SK-N-SH (cell line): ENCODE measurements at regions of chr2 and their contacts with region 1.

Region 1: DNA sequence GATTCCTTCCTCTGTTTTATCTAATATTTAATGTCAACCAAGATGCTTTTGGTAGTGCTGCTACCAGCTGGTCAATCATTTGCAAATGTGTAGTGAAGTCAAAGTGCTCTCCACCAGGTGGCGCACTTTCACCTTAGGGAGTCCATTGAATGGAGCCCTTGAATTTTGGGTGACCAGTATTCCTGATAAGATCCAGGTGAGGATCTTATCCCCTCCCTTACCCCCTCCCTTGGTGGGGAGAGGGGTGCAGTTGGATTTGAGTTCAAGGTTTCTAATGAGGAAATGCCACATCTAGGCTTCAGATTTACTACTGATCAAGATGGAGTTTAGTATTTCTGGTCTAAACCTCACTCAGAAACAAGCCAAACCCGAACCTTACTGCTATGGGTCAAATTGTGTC is 12.0 kb upstream of the E2F6 start:
- DNase-seq: peak; percentile 74
- H3K4me3 ChIP-seq: no peak overlapping the region; a peak in 1 of 4 replicates
- H3K27ac ChIP-seq: no peak overlapping the region
- H3K4me1 ChIP-seq: peaks cover 0 to 3% of the 10 kb centered on the region in 2 experiments; a peak in 1 of 4 replicates
- H3K27me3 ChIP-seq: peaks cover 12% of the 10 kb centered on the region; the same call in 1 of the 2 replicates
- CTCF ChIP-seq: peak; percentile 99
- EP300 ChIP-seq: 0 out of 4 replicates have a peak, but pooled peaks of 1 of the 2 experiments have one; percentile 12
- RAD21 ChIP-seq: peak; percentile 93

Region 2: DNA sequence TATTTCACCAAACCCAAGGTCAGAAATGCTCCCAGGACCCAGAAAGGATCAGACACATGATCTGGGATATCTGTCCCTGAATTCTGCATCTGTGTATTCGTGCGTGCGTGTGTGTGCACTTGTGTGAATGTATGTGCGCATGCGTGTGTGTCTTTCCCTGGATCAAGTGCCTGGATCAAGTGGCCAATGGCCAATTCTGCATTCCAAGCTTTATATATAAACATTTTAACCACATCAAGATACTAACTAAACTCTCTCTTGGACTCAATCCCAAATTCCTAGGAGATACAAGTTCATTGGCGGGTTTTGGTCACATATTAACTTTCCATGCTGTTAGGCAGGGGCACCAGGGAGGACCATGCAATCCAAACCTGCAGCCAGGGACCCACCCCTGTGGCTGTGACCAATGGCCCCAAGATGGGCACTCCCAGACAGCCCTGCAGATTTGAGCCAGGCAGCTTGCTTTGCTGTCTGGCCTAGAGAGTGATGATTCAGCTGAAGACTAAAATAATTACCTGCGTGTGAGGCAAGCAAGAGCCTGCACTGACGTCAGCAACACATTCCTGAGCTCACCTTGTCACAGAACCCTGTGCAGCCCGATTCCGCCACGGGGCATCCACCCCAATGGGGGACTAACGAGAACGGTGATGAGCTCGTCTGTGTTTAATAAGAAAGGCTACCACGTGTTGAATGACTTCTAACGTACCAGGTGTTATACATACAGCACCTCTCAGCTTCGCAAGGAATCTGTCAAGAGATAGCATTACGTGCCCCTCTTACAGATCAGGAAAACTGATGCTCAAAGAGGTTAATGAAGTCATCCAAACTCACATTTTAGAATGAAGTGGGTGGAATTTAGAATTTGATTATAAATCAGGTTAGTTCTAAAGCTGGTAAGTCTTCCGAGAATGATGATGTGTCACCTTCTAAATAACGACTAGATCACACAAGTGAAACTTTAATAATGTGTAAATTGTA is 88.2 kb before region 1 on chr2:
- CTCF ChIA-PET with region 1: no interaction called
- POLR2A ChIA-PET with region 1: no interaction called
- DNase-seq: no peak
- H3K4me3 ChIP-seq: no peak overlapping the region
- H3K27ac ChIP-seq: no peak overlapping the region
- H3K4me1 ChIP-seq: peaks cover 21 to 27% of the 10 kb centered on the region in 2 experiments; a peak in 3 of 4 replicates
- H3K27me3 ChIP-seq: no peaks in the 10 kb centered on the region
- CTCF ChIP-seq: no peak
- EP300 ChIP-seq: no peak
- RAD21 ChIP-seq: no peak

Region 3: DNA sequence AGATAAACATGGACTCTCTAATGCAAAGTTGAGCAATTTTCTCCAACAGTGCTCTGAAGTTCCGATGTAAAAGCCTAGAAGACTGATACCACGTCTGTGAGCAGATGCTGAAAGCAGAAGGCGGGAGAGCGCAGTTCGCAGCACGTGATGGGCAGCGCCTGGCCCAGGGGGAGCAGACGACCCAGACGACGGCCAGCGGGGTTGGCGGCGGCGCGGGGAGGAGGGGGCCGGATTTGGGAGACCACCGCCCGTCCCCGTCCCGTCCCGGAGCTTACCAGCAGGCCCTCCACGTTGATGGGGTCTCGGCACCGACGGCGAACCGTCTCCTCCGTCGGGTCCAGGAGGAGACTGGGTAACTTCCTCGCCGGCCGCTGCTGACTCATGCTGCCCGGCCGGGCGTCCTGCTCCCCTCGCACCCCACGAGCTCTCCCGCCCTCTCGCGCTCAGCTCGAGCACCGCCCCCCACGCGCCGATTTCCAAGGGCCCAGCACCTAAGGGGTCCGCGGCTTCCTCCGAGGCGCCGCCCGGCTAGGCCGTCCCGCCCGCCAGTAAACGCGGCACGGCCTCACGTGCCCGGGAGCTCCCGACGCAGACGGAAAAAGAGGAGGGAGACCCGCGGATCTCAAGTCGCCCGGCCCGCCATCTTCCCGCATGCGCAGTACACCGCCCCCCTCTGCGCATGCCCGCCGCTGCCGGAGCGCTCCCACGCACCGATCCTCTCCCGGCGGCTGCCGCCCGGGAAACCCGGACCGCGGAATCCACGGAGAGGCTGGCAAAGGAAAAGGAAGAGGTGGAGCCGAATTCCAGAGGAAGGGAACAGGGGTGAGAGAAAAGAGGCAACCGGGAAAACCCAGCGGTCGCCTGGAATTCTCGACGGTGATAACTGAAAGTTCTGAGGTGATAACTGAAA is 12.2 kb before region 1 on chr2 and contains the start of gene E2F6:
- CTCF ChIA-PET with region 1: interaction called, 55 read pairs
- POLR2A ChIA-PET with region 1: interaction called, 16 read pairs
- DNase-seq: peak; percentile 98
- H3K4me3 ChIP-seq: peak within 1 kb of the TSS; percentile 64 to 72
- H3K27ac ChIP-seq: peak within 1 kb of the TSS; percentile 86 to 90
- H3K4me1 ChIP-seq: peaks cover 16 to 27% of the 10 kb centered on the region in 2 experiments
- H3K27me3 ChIP-seq: no peaks in the 10 kb centered on the region
- CTCF ChIP-seq: no peak
- EP300 ChIP-seq: peak; percentile 48 to 72
- RAD21 ChIP-seq: no peak
- polyA plus RNA-seq, gene E2F6: 15.3 and 19.7 TPM in 2 replicates

Region 4: DNA sequence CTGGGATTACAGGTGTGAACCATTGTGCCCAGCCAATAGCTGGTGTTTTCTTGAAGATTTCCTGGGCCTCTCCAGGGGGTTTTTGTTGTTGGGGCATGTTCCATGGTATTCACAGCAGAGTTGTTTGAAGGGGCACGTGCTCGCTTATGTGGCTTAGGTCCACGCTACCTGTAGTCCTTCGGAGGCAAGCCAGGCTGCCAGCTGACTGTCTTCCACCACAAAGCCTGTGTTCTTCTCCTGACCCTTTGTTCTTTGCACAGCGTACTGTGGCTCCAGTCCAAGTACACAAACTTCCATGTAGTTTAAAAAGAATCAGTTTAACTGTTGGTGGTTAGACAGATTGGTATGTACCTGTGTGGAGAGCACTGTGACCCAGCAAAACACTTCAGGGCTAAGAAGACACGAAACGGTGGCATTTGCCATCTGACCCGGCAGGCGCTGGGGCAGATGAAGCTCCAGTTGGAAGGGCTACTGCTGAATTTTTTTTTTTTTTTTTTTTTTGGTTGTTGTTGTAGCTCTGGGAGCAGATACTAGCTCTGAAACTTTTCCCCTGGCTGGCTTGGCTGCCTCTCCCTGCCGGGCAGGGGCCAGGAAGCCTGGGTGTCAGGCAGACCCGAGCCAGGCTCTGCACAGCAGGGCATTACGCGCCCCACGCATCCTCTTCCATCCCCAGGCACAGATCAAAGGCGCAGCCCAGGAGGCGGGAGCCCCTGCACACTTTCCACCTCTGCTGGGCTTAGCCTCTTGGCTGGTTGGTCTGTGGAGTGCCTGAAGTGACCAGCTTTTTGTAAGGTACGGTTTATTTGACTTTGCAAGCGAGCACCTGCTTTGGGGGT is 61.5 kb after region 1 on chr2:
- CTCF ChIA-PET with region 1: interaction called, 13 read pairs
- POLR2A ChIA-PET with region 1: no interaction called
- DNase-seq: no peak
- H3K4me3 ChIP-seq: no peak overlapping the region
- H3K27ac ChIP-seq: no peak overlapping the region
- H3K4me1 ChIP-seq: peaks cover 0 to 43% of the 10 kb centered on the region in 2 experiments; a peak in 2 of 4 replicates
- H3K27me3 ChIP-seq: peaks cover 16% of the 10 kb centered on the region; the same call in 1 of the 2 replicates
- CTCF ChIP-seq: no peak
- EP300 ChIP-seq: no peak
- RAD21 ChIP-seq: no peak

Region 5: GRCh38 chr2:11573418-11574175 is 95.6 kb after region 1 on chr2:
- CTCF ChIA-PET with region 1: interaction called, 708 read pairs
- POLR2A ChIA-PET with region 1: no interaction called
- DNase-seq: no peak
- H3K4me3 ChIP-seq: no peak overlapping the region
- H3K27ac ChIP-seq: no peak overlapping the region
- H3K4me1 ChIP-seq: no peaks in the 10 kb centered on the region; a peak in 1 of 4 replicates
- H3K27me3 ChIP-seq: no peaks in the 10 kb centered on the region
- CTCF ChIP-seq: no peak
- EP300 ChIP-seq: no peak
- RAD21 ChIP-seq: no peak

Region 6: DNA sequence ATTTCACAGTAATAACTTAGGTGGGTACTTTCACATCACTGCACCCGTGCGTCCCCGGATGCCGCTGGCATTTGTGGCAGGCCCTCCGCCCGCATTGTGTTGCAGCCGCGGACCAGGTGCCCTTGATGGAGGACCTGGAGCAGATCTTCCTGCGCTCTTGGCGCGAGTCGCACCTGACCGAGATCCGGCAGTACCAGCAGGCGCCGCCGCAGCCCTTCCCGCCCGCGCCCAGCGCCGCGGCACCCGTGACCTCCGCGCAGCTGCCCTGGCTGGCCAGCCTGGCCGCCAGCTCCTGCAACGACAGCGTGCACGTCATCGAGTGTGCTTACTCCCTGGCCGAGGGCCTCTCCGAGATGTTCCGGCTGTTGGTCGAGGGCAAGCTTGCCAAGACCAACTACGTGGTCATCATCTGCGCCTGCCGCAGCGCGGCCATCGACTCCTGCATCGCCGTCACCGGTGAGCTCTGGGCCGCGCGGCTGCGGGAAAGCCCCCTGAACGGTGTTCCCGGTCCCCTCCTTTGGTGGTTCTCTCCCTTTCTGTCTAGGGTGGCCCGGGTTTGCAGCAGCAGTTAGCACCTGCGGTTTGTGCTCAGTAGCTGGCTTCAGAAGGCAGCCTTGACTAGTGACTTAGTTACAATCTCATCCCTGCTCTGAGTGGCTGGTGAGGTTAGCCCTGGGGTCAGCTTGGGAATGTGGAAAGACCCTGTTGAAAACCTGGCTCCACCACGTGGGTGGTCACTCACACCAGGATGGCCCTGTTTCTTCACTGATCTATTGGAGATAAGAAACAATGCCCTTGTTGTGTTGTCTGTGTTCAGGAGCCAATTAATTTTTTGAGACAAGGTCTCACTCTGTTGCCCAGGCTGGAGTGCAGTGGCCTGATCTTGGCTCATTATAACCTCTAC is 114.9 kb after region 1 on chr2:
- CTCF ChIA-PET with region 1: interaction called, 708 read pairs
- POLR2A ChIA-PET with region 1: no interaction called
- DNase-seq: no peak
- H3K4me3 ChIP-seq: no peak overlapping the region
- H3K27ac ChIP-seq: no peak overlapping the region
- H3K4me1 ChIP-seq: peaks cover 0 to 6% of the 10 kb centered on the region in 2 experiments; a peak in 1 of 4 replicates
- H3K27me3 ChIP-seq: no peaks in the 10 kb centered on the region
- CTCF ChIP-seq: no peak
- EP300 ChIP-seq: no peak
- RAD21 ChIP-seq: no peak

Region 7: DNA sequence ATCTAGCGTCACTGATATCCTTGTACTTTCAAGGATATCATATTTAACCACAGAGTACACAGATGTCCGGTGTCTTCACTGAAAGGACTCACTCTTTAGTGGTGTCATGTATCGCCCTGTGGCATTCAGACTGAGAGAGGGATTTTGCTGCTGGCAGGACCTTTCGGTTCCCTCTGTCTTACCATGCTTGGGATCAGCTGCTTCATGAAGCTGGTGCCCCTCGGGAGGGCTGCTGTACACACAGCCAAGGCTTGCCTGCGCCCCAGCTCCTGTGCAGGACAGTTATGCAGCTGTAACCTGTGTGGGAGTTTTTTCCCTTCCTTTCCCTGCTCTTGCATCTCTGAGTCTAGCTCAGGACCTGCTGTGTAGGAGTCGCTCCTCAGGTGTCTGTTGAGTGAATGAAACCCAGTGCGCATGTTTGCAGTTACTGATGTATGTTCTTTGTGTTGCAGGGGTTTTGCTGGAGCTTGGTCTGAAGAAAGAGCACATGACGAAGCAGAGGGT is 120.3 kb after region 1 on chr2:
- CTCF ChIA-PET with region 1: interaction called, 59 read pairs
- POLR2A ChIA-PET with region 1: no interaction called
- DNase-seq: no peak
- H3K4me3 ChIP-seq: no peak overlapping the region
- H3K27ac ChIP-seq: no peak overlapping the region
- H3K4me1 ChIP-seq: no peaks in the 10 kb centered on the region
- H3K27me3 ChIP-seq: no peaks in the 10 kb centered on the region
- CTCF ChIP-seq: no peak
- EP300 ChIP-seq: no peak
- RAD21 ChIP-seq: no peak

Region 8: GRCh38 chr2:11681722-11682589 is 204.0 kb after region 1 on chr2:
- CTCF ChIA-PET with region 1: interaction called, 17 read pairs
- POLR2A ChIA-PET with region 1: no interaction called
- DNase-seq: peak; percentile 90
- H3K4me3 ChIP-seq: no peak overlapping the region; a peak in 1 of 4 replicates
- H3K27ac ChIP-seq: no peak overlapping the region
- H3K4me1 ChIP-seq: peaks cover 0 to 19% of the 10 kb centered on the region in 2 experiments; a peak in 1 of 4 replicates
- H3K27me3 ChIP-seq: peaks cover 14% of the 10 kb centered on the region; the same call in 1 of the 2 replicates
- CTCF ChIP-seq: peak; percentile 93
- EP300 ChIP-seq: no peak
- RAD21 ChIP-seq: peak; percentile 76